ENCODE measurements at regions of chr1 and their contacts with region 1.

Region 1: GRCh38 chr1:158043232-158043631 is 49.8 kb downstream of the KIRREL1 start:
- DNase-seq: no peak
- H3K4me3 ChIP-seq: no peak overlapping the region
- H3K27ac ChIP-seq: no peak overlapping the region
- H3K4me1 ChIP-seq: peaks cover 9 to 27% of the 10 kb centered on the region in 2 donors
- H3K27me3 ChIP-seq: no peaks in the 10 kb centered on the region
- CTCF ChIP-seq: no peak
- POLR2A ChIP-seq: no peak

Region 2: DNA sequence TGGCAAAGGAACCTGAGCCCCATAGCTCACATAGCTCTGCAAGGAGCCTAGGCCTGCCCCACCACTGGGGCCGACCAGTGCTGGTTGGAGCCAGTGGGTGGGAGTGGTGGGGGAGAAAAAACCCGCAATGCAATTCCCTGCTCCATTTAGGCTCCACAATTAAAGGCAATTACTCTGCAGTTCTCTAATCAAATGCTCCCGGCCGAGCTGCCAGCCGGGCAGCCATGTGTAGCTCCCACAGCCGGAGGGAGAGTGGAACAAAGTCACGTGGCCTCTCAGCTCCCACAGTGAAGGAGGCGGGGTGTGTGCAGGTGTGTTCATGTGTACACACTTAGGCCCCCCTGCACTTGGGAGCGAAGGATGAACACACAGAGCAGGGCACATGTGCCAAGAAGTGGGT is 31.8 kb after region 1 on chr1:
- intact Hi-C with region 1: loop called (anchors 5 kb)
- DNase-seq: peak; percentile 86 to 87
- H3K4me3 ChIP-seq: no peak overlapping the region
- H3K27ac ChIP-seq: peak overlapping the region in 2 of 3 donors; percentile 24 to 60
- H3K4me1 ChIP-seq: peaks cover 9 to 23% of the 10 kb centered on the region in 2 donors
- H3K27me3 ChIP-seq: no peaks in the 10 kb centered on the region
- CTCF ChIP-seq: no peak
- POLR2A ChIP-seq: no peak

Region 3: GRCh38 chr1:158248118-158248517 is 204.9 kb after region 1 on chr1:
- intact Hi-C with region 1: no loop called
- DNase-seq: no peak
- H3K4me3 ChIP-seq: no peak overlapping the region
- H3K27ac ChIP-seq: no peak overlapping the region
- H3K4me1 ChIP-seq: no peaks in the 10 kb centered on the region
- H3K27me3 ChIP-seq: no peaks in the 10 kb centered on the region
- CTCF ChIP-seq: no peak
- POLR2A ChIP-seq: no peak